GM10248 (cell line): ENCODE measurements at regions of chr3 and their contacts with region 1.

Region 1: GRCh38 chr3:99532246-99532645 is 106.1 kb upstream of the COL8A1 start:
- DNase-seq: peak; percentile 17
- CTCF ChIP-seq: peak; percentile 43

Region 2: DNA sequence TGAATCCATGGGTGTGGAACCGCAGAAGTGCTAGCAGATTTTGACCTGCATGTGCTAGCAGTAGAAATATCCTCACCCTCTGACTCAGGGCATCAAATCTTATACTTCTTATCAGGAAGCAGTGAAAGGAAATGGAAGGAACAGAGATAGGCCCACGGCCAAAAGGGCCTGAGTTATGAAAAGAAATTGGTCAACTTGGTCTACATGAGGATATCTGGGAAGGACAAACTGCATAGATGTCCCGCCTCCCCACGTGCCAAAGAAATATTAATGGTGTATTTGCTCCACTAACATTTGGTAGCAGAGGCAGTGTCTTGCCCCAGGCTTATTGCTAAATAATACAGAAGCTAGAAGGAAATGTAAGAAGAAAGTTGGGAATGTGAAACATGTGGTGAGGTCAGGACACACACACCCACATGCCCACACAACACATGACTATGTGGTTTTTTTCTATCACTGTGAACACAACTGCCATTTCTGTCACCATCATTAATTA is 12.6 kb after region 1 on chr3:
- CTCF ChIA-PET with region 1: interaction called, 20 read pairs
- POLR2A ChIA-PET with region 1: no interaction called
- DNase-seq: no peak
- CTCF ChIP-seq: no peak

Region 3: GRCh38 chr3:99549957-99550603 is 17.8 kb after region 1 on chr3:
- CTCF ChIA-PET with region 1: interaction called, 20 read pairs
- POLR2A ChIA-PET with region 1: no interaction called
- DNase-seq: no peak
- CTCF ChIP-seq: no peak